Aorta (tissue), 5 donors: ENCODE measurements at regions of chr9 and their contacts with region 1.

Region 1: GRCh38 chr9:121213136-121213806 is 11.6 kb upstream of the RAB14 start:
- DNase-seq: peak; percentile 93 to 96
- ATAC-seq: peak; percentile 95
- H3K4me3 ChIP-seq: no peak overlapping the region
- H3K27ac ChIP-seq: peak overlapping the region in 1 of 2 donors; percentile 32
- H3K4me1 ChIP-seq: no peaks in the 10 kb centered on the region
- H3K27me3 ChIP-seq: no peaks in the 10 kb centered on the region

Region 2: GRCh38 chr9:121267689-121268597 is 54.7 kb after region 1 on chr9 and contains the start of gene GSN:
- intact Hi-C with region 1: loop called (anchors 5 kb)
- DNase-seq: peak; percentile 91 to 95
- ATAC-seq: peak; percentile 89
- H3K4me3 ChIP-seq: peak within 1 kb of the TSS; percentile 83 to 99
- H3K27ac ChIP-seq: peak within 1 kb of the TSS; percentile 83 to 97
- H3K4me1 ChIP-seq: peaks cover 0 to 2% of the 10 kb centered on the region in 2 donors
- H3K27me3 ChIP-seq: no peaks in the 10 kb centered on the region
- total RNA-seq, gene GSN: 922 to 2,469 TPM

Region 3: DNA sequence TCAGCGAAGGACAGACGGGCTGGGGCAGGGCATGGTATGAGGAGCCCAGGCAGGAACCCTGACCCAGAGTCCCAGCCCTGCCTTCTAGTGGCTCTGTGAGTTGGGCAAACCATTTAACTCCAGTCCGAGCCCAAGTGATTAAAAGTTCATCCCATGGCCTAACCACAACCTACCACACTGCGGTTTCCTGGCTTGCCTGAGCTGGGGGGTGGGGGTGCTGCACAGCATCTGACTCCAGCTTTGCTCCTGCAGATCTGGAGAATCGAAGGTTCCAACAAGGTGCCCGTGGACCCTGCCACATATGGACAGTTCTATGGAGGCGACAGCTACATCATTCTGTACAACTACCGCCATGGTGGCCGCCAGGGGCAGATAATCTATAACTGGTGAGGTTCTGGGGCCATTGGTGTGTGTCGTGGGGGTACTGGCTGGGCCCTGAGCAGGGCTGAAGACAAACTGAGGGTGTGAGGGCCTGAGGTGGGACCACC is 107.8 kb after region 1 on chr9:
- intact Hi-C with region 1: loop called (anchors 5 kb)
- DNase-seq: no peak
- ATAC-seq: no peak
- H3K4me3 ChIP-seq: no peak overlapping the region
- H3K27ac ChIP-seq: peak overlapping the region in 1 of 2 donors; percentile 68
- H3K4me1 ChIP-seq: no peaks in the 10 kb centered on the region
- H3K27me3 ChIP-seq: no peaks in the 10 kb centered on the region

Region 4: GRCh38 chr9:121369595-121370265 is 156.5 kb after region 1 on chr9 and contains the start of gene STOM:
- intact Hi-C with region 1: loop called in 1 of 2 experiments (anchors 1 kb)
- DNase-seq: peak; percentile 92 to 96
- ATAC-seq: peak; percentile 89
- H3K4me3 ChIP-seq: peak within 1 kb of the TSS; percentile 48 to 84
- H3K27ac ChIP-seq: peak within 1 kb of the TSS; percentile 62 to 78
- H3K4me1 ChIP-seq: peaks cover 0 to 6% of the 10 kb centered on the region in 2 donors
- H3K27me3 ChIP-seq: no peaks in the 10 kb centered on the region
- total RNA-seq, gene STOM: 375 to 384 TPM

Region 5: GRCh38 chr9:121399883-121400607 is 186.8 kb after region 1 on chr9:
- intact Hi-C with region 1: loop called (anchors 2 kb)
- DNase-seq: no peak
- ATAC-seq: peak; percentile 71
- H3K4me3 ChIP-seq: no peak overlapping the region
- H3K27ac ChIP-seq: no peak overlapping the region
- H3K4me1 ChIP-seq: no peaks in the 10 kb centered on the region
- H3K27me3 ChIP-seq: no peaks in the 10 kb centered on the region